OCI-LY7 (cell line): ENCODE measurements at regions of chr3 and their contacts with region 1.

Region 1: DNA sequence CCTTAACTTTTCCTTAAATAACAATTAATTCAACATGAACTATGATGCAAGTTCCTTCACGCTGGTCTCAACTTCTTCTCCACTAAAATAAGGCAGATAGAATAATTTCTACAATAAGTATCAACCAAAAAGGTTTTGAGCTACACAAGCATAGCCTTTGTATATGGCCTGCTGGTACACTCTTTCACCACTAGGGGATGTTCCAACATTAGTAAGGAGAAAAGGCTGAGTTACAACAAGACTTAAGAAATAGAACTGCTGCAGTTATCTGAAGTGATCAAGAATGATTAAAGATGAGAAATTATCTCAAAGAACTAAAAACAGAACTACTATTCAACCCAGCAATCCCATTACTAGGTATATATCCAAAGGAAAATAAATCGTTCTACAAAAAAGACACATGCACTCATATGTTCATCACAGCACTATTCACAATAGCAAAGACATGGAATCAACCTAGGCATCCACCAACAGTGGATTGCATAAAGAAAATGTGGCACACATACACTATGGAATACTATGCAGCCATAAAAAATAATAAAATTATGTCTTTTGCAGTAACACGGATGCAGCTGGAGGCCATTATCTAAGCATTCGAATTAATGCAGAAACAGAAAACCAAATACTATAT is 14.4 kb downstream of the ATP13A3 start:
- DNase-seq: peak; percentile 77
- H3K4me3 ChIP-seq: no peak overlapping the region
- H3K27ac ChIP-seq: no peak overlapping the region
- H3K4me1 ChIP-seq: no peaks in the 10 kb centered on the region
- CTCF ChIP-seq: peak; percentile 93

Region 2: GRCh38 chr3:194573691-194574437 is 101.5 kb after region 1 on chr3:
- CTCF ChIA-PET with region 1: interaction called, 5 read pairs
- POLR2A ChIA-PET with region 1: no interaction called
- intact Hi-C with region 1: loop called (anchors 5 kb)
- DNase-seq: peak; percentile 47
- H3K4me3 ChIP-seq: no peak overlapping the region
- H3K27ac ChIP-seq: no peak overlapping the region
- H3K4me1 ChIP-seq: no peaks in the 10 kb centered on the region
- CTCF ChIP-seq: peak; percentile 74

Region 3: GRCh38 chr3:194592798-194593752 is 120.7 kb after region 1 on chr3:
- CTCF ChIA-PET with region 1: interaction called, 4 read pairs
- POLR2A ChIA-PET with region 1: no interaction called
- intact Hi-C with region 1: loop called (anchors 1 kb)
- DNase-seq: peak; percentile 20
- H3K4me3 ChIP-seq: no peak overlapping the region
- H3K27ac ChIP-seq: no peak overlapping the region
- H3K4me1 ChIP-seq: peaks cover 12% of the 10 kb centered on the region
- CTCF ChIP-seq: no peak